ENCODE measurements at regions of chr15 and their contacts with region 1.

Region 1: DNA sequence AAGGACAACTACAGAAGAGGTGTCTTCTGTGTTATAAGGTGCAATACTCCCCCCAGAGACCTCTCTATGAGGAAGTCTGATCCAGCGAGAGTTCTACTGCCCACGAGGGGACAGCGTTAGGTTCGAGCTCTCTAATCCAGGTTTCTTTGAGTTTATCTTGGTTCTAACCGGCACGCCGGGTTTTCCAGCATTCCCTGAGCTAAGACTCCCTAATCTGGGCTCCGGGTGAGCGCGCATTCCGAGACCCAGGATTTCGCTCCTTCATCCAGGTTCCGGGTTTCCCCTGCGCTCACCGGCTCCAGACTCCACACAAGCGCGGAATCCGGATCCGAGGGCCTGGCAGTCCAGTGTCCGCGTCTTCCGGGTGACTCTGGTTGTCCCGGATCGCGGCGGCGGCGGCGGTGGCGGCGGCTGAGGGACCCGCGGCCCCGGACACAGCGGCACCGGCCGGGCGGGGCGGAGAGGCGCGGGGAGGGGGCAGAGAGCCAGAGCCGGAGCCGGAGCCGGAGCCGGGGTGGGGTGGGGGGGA is at the start of gene ZNF609:
- DNase-seq: peak; percentile 96
- H3K4me3 ChIP-seq: peak within 1 kb of the TSS; percentile 56 to 96 (median 84)
- H3K27ac ChIP-seq: peak within 1 kb of the TSS; percentile 86 to 97 (median 92)
- H3K4me1 ChIP-seq: peaks cover 4 to 74% (median 67%) of the 10 kb centered on the region in 4 donors
- H3K27me3 ChIP-seq: no peaks in the 10 kb centered on the region
- CTCF ChIP-seq: no peak
- EP300 ChIP-seq: no peak
- POLR2A ChIP-seq: peak in 1 of 2 donors; percentile 38
- total RNA-seq, gene ZNF609: 29.6 to 35.2 (median 31.0) TPM

Region 2: GRCh38 chr15:64180235-64180837 is 279.9 kb before region 1 on chr15:
- intact Hi-C with region 1: no loop called
- DNase-seq: no peak
- H3K4me3 ChIP-seq: no peak overlapping the region
- H3K27ac ChIP-seq: no peak overlapping the region
- H3K4me1 ChIP-seq: no peaks in the 10 kb centered on the region
- H3K27me3 ChIP-seq: no peaks in the 10 kb centered on the region
- CTCF ChIP-seq: no peak
- EP300 ChIP-seq: no peak
- POLR2A ChIP-seq: no peak

Region 3: DNA sequence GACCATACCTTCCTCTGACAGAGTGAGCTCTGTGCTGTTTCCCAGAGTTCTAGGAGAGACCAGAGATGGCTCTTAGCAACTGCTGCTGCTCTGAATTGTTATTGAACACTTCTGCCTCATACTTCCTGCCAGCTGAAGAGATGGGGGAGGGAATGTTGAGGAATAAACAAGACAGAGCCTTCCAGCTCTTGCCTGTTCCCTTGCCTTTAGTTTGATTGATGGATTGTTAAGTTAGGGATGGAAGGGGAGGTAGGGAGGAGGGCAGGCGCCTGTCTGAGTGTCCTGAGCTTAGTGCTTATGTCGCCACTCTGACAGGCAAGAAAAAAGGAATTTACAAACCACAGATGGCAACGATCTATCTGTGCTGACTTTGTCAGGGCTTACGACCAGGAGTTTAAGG is 42.9 kb after region 1 on chr15:
- intact Hi-C with region 1: loop called (anchors 5 kb)
- DNase-seq: no peak
- H3K4me3 ChIP-seq: no peak overlapping the region
- H3K27ac ChIP-seq: peak overlapping the region; percentile 65 to 74 (median 70)
- H3K4me1 ChIP-seq: peaks cover 0 to 69% (median 66%) of the 10 kb centered on the region in 4 donors
- H3K27me3 ChIP-seq: no peaks in the 10 kb centered on the region
- CTCF ChIP-seq: no peak
- EP300 ChIP-seq: no peak
- POLR2A ChIP-seq: no peak

Region 4: GRCh38 chr15:65304389-65305144 is 844.3 kb after region 1 on chr15 and contains the start of gene RNU5B-1:
- intact Hi-C with region 1: no loop called
- DNase-seq: peak; percentile 88
- H3K4me3 ChIP-seq: peak within 1 kb of the TSS; percentile 37 to 57 (median 54)
- H3K27ac ChIP-seq: peak within 1 kb of the TSS; percentile 88 to 93 (median 90)
- H3K4me1 ChIP-seq: peaks cover 0 to 19% (median 15%) of the 10 kb centered on the region in 4 donors
- H3K27me3 ChIP-seq: no peaks in the 10 kb centered on the region
- CTCF ChIP-seq: no peak
- EP300 ChIP-seq: peak in 3 of 4 donors; percentile 2 to 56 (median 28)
- POLR2A ChIP-seq: peak; percentile 98 to 99
- total RNA-seq, gene RNU5B-1: not detected